ENCODE measurements at regions of chr2 and their contacts with region 1.

Region 1: GRCh38 chr2:240143801-240144648 is 3.6 kb upstream of the OTOS start:
- DNase-seq: peak; percentile 22
- ATAC-seq: peak; percentile 98
- H3K4me3 ChIP-seq: no peak overlapping the region
- H3K27ac ChIP-seq: no peak overlapping the region
- H3K4me1 ChIP-seq: no peaks in the 10 kb centered on the region
- H3K27me3 ChIP-seq: peaks cover 27% of the 10 kb centered on the region
- CTCF ChIP-seq: peak; percentile 94
- POLR2A ChIP-seq: no peak
- RAD21 ChIP-seq: peak; percentile 91

Region 2: GRCh38 chr2:240021488-240022104 is 122.4 kb before region 1 on chr2:
- CTCF ChIA-PET with region 1: no interaction called
- POLR2A ChIA-PET with region 1: no interaction called
- dilution Hi-C with region 1: no loop called
- in situ Hi-C with region 1: no loop called
- intact Hi-C with region 1: loop called (anchors 2 kb)
- DNase-seq: peak; percentile 47
- ATAC-seq: peak; percentile 42; the same call in 1 of the 2 replicates
- H3K4me3 ChIP-seq: no peak overlapping the region
- H3K27ac ChIP-seq: no peak overlapping the region
- H3K4me1 ChIP-seq: 0 out of 2 replicates have a peak, but pooled peaks cover 1% of the 10 kb centered on the region
- H3K27me3 ChIP-seq: no peaks in the 10 kb centered on the region
- CTCF ChIP-seq: peak; percentile 67
- POLR2A ChIP-seq: no peak
- RAD21 ChIP-seq: peak; percentile 27; the same call in 1 of the 2 replicates

Region 3: GRCh38 chr2:240060977-240061591 is 82.9 kb before region 1 on chr2:
- CTCF ChIA-PET with region 1: interaction called, 40 read pairs
- POLR2A ChIA-PET with region 1: no interaction called
- dilution Hi-C with region 1: no loop called
- in situ Hi-C with region 1: loop called (anchors 5 kb)
- intact Hi-C with region 1: loop called (anchors 1 kb)
- DNase-seq: peak; percentile 57
- ATAC-seq: peak; percentile 96
- H3K4me3 ChIP-seq: no peak overlapping the region
- H3K27ac ChIP-seq: no peak overlapping the region
- H3K4me1 ChIP-seq: no peaks in the 10 kb centered on the region
- H3K27me3 ChIP-seq: peaks cover 16% of the 10 kb centered on the region
- CTCF ChIP-seq: peak; percentile 69
- POLR2A ChIP-seq: no peak
- RAD21 ChIP-seq: peak; percentile 72

Region 4: GRCh38 chr2:240217431-240218239 is 73.6 kb after region 1 on chr2:
- CTCF ChIA-PET with region 1: no interaction called
- POLR2A ChIA-PET with region 1: no interaction called
- dilution Hi-C with region 1: no loop called
- in situ Hi-C with region 1: no loop called
- intact Hi-C with region 1: no loop called
- DNase-seq: no peak
- ATAC-seq: no peak
- H3K4me3 ChIP-seq: no peak overlapping the region
- H3K27ac ChIP-seq: no peak overlapping the region
- H3K4me1 ChIP-seq: peaks cover 2% of the 10 kb centered on the region
- H3K27me3 ChIP-seq: peaks cover 7% of the 10 kb centered on the region; the same call in 1 of the 2 replicates
- CTCF ChIP-seq: no peak
- POLR2A ChIP-seq: no peak
- RAD21 ChIP-seq: no peak

Measured in IMR-90 (cell line).